Calu3 (cell line): ENCODE measurements at regions of chr5 and their contacts with region 1.

Region 1: GRCh38 chr5:40736103-40736875 is 19.5 kb downstream of the TTC33 start:
- DNase-seq: peak; percentile 25
- H3K4me3 Mint-ChIP-seq: no peak overlapping the region
- H3K27ac Mint-ChIP-seq: peak overlapping the region; percentile 73
- H3K4me1 Mint-ChIP-seq: peaks cover 29% of the 10 kb centered on the region
- H3K27me3 Mint-ChIP-seq: no peaks in the 10 kb centered on the region
- CTCF ChIP-seq: peak; percentile 46

Region 2: DNA sequence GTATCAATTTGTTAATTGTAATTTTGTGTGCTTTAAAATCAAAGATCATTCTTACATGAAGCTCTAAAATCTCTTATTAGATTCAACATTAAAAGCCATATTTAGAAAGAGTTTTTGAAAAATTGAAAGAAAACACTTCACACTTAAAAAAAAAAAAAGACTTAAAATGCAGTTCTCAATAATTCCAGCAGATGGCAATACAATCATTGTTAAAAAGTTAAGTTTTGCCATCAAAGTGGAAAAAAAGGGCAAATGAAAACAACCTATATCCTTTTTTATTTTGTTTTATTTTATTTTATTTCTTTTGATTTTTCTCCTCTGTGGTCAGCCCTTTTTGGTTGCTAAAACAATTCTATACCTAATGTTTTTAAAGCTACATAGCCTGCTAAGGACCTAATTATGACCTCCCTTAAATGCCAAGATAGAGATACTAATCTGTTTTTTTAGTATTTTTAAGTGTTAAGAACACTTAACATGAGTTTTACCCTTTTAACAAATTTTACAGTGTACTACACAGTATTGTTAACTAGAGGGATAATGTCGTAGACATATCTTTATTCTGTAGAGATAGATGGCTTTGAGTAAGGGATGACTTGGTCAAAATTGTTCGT is 1157.3 kb before region 1 on chr5:
- CTCF ChIA-PET with region 1: no interaction called
- intact Hi-C with region 1: loop called (anchors 2 kb)
- DNase-seq: no peak
- H3K4me3 Mint-ChIP-seq: no peak overlapping the region
- H3K27ac Mint-ChIP-seq: no peak overlapping the region
- H3K4me1 Mint-ChIP-seq: peaks cover 18% of the 10 kb centered on the region
- H3K27me3 Mint-ChIP-seq: no peaks in the 10 kb centered on the region
- CTCF ChIP-seq: peak; percentile 42

Region 3: DNA sequence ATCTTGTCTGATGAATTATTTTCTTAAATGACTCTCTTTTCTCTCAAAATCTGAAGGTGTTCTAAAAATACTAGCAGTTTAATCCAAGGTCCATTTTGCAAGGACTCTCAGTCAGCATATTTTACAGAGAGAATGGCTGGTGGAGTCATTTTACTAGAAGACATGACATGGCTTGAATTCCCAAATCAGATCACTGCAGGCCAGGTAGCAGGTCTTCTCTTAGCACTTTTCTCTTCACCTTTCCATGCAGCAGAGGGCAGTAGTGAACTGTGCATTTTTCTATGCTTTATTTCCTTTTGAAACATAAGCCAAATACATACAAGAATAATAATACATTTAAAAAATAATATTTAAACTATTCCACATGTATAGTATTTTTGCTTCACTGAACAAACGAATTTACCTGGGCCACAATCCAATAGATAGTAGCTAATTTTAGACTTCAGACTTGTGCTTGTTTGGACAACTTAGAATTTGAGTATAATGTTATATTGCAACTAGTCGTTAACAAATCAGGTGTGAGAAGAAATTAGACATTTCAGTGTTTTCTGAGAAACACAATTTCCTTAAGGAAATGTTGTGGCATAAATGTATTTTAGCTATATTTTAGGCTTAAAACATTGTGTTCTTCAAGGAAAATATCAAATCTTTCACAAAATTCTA is 1022.1 kb before region 1 on chr5:
- CTCF ChIA-PET with region 1: no interaction called
- intact Hi-C with region 1: loop called (anchors 1 kb)
- DNase-seq: peak; percentile 61
- H3K4me3 Mint-ChIP-seq: no peak overlapping the region
- H3K27ac Mint-ChIP-seq: no peak overlapping the region
- H3K4me1 Mint-ChIP-seq: peaks cover 31% of the 10 kb centered on the region
- H3K27me3 Mint-ChIP-seq: no peaks in the 10 kb centered on the region
- CTCF ChIP-seq: peak; percentile 52

Region 4: DNA sequence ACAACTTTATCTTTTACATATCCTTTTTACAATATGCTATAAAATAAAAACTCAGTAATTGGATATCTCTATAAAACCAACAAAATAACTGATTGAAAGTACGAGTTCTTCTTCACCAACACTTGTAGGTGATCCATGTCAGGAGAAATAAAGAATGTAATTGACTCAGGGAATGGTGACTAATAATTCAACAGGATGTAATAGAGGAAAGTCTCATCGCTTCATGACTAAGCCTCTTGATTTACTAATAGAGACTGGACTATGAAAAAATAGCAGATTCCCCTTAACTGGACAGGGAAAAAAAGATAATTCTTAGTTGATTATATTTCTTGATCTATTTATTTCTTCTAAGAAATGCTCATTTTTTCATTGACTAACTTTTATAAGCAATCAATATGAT is 564.3 kb before region 1 on chr5:
- CTCF ChIA-PET with region 1: no interaction called
- intact Hi-C with region 1: loop called (anchors 5 kb)
- DNase-seq: no peak
- H3K4me3 Mint-ChIP-seq: no peak overlapping the region
- H3K27ac Mint-ChIP-seq: no peak overlapping the region
- H3K4me1 Mint-ChIP-seq: peaks cover 18% of the 10 kb centered on the region
- H3K27me3 Mint-ChIP-seq: no peaks in the 10 kb centered on the region
- CTCF ChIP-seq: no peak

Region 5: DNA sequence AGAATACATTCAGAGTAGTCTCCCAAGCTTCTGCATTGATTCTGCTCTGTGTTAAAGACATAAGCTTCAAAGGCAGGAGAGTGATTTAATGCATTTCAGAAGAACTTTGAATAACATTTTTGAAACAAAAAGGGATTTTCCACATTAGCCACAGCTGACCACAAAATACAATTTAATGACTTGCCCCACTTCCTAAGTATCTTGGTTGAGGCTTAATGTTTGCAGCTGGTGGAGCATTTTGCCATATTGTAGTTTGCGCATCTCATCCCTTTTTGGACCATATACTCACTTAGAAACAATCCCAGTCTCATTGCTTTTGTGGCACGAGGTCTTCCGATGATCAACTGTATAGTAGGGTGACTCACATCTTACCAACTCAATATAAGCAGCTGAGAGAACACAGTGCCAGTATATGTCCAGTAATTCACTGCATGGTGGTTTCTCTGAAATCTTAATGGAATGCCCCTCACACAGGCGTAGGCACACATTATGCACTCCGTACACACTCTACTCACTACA is 512.3 kb before region 1 on chr5:
- CTCF ChIA-PET with region 1: no interaction called
- intact Hi-C with region 1: no loop called
- DNase-seq: no peak
- H3K4me3 Mint-ChIP-seq: no peak overlapping the region
- H3K27ac Mint-ChIP-seq: no peak overlapping the region
- H3K4me1 Mint-ChIP-seq: no peaks in the 10 kb centered on the region
- H3K27me3 Mint-ChIP-seq: no peaks in the 10 kb centered on the region
- CTCF ChIP-seq: no peak

Region 6: GRCh38 chr5:40386289-40386688 is 350.0 kb before region 1 on chr5:
- CTCF ChIA-PET with region 1: no interaction called
- intact Hi-C with region 1: loop called (anchors 10 kb)
- DNase-seq: no peak
- H3K4me3 Mint-ChIP-seq: no peak overlapping the region
- H3K27ac Mint-ChIP-seq: no peak overlapping the region
- H3K4me1 Mint-ChIP-seq: peaks cover 17% of the 10 kb centered on the region
- H3K27me3 Mint-ChIP-seq: no peaks in the 10 kb centered on the region
- CTCF ChIP-seq: no peak

Region 7: GRCh38 chr5:40605295-40605958 is 130.9 kb before region 1 on chr5:
- CTCF ChIA-PET with region 1: no interaction called
- intact Hi-C with region 1: no loop called
- DNase-seq: no peak
- H3K4me3 Mint-ChIP-seq: no peak overlapping the region
- H3K27ac Mint-ChIP-seq: no peak overlapping the region
- H3K4me1 Mint-ChIP-seq: no peaks in the 10 kb centered on the region
- H3K27me3 Mint-ChIP-seq: no peaks in the 10 kb centered on the region
- CTCF ChIP-seq: no peak

Region 8: GRCh38 chr5:40781843-40782409 is 45.6 kb after region 1 on chr5:
- CTCF ChIA-PET with region 1: no interaction called
- intact Hi-C with region 1: no loop called
- DNase-seq: no peak
- H3K4me3 Mint-ChIP-seq: no peak overlapping the region
- H3K27ac Mint-ChIP-seq: peak overlapping the region; percentile 5
- H3K4me1 Mint-ChIP-seq: peaks cover 49% of the 10 kb centered on the region
- H3K27me3 Mint-ChIP-seq: no peaks in the 10 kb centered on the region
- CTCF ChIP-seq: no peak